ENCODE measurements at regions of chr6 and their contacts with region 1.

Region 1: DNA sequence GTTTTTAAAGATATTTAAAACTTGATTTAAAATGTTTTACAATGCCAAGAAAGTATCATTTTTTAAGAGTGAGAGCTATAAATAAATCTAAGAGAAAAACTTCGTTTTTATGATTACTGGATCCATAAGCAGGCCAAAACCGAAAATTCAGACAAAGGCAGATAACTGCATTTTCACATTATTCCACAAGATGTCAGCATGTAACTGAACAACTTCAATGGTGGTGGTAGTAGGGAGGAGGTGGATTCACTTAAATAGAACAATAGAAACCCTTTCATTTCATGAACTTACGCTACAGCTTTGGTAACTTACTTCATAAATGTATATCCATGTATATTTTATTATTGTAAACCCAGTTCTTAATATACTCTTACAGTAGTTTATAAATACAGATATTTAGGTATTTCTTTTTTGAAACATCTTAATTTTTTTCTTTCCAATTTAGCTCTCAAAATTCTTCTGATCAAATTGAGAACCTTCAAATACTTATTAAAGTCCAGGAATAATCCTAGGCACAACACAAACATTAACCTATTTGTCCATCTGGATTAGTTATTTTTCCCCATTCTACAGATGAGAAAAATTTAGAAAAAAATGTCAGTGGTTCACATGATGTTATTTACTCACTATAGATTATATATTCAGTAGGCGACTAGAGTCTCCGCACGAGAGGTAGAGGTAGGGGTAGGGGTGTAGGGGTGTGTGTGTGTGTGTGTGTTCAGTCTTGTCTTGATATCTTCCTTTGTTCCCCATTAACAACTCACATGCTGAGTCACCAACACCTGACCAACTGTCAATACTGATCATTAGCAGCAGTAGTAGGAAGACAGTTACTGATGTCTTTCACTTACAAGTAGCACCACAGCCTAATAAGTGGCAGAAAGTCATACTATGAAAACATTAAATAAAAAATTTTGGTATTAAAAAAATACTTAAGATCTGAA is 111.5 kb downstream of the ARHGAP18 start:
- DNase-seq: peak in 1 of 2 experiments; percentile 60
- H3K4me3 ChIP-seq: no peak overlapping the region
- H3K4me3 Mint-ChIP-seq: no peak overlapping the region
- H3K27ac Mint-ChIP-seq: no peak overlapping the region
- H3K4me1 ChIP-seq: peaks cover 6% of the 10 kb centered on the region
- H3K4me1 Mint-ChIP-seq: no peaks in the 10 kb centered on the region
- H3K27me3 ChIP-seq: no peaks in the 10 kb centered on the region
- H3K27me3 Mint-ChIP-seq: no peaks in the 10 kb centered on the region
- CTCF ChIP-seq: peak; percentile 61

Region 2: DNA sequence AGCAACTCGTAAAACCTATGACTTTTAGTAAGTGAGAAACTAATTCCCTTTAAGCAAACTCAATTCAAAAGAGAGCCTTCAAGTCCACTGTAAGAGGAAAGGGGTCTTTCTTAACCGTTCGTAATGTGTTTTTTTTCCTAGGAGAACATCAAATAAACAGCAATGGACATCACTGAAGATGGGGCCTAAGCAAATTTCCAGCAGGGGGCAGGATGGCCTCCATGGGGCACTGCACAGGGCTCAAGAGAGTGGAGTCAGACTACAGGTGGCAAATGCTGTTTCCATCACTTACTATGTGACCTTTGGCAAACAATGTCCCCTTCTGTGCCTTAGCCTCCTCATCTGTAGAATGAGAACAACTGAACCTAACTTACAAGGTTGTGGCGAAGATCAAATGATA is 22.7 kb after region 1 on chr6:
- CTCF ChIA-PET with region 1: no interaction called
- POLR2A ChIA-PET with region 1: no interaction called
- intact Hi-C with region 1: no loop called
- DNase-seq: peak in 1 of 2 experiments; percentile 34
- H3K4me3 ChIP-seq: no peak overlapping the region
- H3K4me3 Mint-ChIP-seq: no peak overlapping the region
- H3K27ac Mint-ChIP-seq: no peak overlapping the region
- H3K4me1 ChIP-seq: no peaks in the 10 kb centered on the region
- H3K4me1 Mint-ChIP-seq: no peaks in the 10 kb centered on the region
- H3K27me3 ChIP-seq: no peaks in the 10 kb centered on the region
- H3K27me3 Mint-ChIP-seq: no peaks in the 10 kb centered on the region
- CTCF ChIP-seq: peak in 1 of 2 experiments; percentile 28

Region 3: DNA sequence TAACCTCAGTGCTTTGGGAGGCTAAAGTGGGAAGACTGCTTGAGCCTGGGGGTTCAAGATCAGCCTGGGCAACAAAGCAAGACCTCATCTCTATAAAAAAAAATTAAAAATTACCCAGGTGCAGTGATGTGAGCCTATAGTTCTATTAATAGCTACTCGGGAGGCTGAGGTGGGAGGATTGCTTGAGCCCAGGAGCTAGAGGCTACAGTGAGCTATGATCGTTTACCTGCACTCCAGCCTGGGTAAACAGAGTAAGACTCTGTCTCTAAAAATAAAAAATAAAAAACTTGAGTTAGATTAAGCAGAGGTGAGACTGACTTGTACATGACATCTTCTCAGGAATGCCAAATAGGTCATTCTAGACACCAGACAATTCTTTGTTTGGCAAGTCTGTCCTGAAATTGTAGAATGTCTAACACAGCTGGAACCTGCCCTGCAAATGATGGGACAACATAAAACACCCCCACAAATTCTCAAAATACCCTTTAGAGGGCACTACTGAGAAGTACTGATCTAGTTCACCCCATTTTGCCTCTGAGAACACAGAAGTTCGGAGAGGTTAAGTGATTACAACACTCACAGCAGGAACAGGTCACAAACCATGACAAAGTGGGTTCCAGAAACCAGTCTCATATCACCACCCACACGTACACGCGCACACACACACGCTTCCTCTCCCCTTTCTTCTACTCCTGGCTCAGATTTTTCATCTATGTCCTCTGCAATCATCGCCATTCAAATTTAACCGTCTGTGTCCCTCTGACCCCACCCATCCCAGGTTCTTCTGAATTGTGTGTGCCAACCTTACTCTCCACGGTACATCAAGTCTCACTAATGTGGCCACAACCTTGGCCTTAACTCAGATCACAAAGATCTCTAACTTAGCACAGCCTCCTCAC is 73.2 kb after region 1 on chr6:
- CTCF ChIA-PET with region 1: no interaction called
- POLR2A ChIA-PET with region 1: no interaction called
- intact Hi-C with region 1: loop called (anchors 1 kb)
- DNase-seq: peak in 1 of 2 experiments; percentile 30
- H3K4me3 ChIP-seq: no peak overlapping the region
- H3K4me3 Mint-ChIP-seq: no peak overlapping the region
- H3K27ac Mint-ChIP-seq: peak overlapping the region; percentile 73
- H3K4me1 ChIP-seq: peaks cover 34% of the 10 kb centered on the region
- H3K4me1 Mint-ChIP-seq: peaks cover 38% of the 10 kb centered on the region
- H3K27me3 ChIP-seq: no peaks in the 10 kb centered on the region
- H3K27me3 Mint-ChIP-seq: no peaks in the 10 kb centered on the region
- CTCF ChIP-seq: no peak

Region 4: DNA sequence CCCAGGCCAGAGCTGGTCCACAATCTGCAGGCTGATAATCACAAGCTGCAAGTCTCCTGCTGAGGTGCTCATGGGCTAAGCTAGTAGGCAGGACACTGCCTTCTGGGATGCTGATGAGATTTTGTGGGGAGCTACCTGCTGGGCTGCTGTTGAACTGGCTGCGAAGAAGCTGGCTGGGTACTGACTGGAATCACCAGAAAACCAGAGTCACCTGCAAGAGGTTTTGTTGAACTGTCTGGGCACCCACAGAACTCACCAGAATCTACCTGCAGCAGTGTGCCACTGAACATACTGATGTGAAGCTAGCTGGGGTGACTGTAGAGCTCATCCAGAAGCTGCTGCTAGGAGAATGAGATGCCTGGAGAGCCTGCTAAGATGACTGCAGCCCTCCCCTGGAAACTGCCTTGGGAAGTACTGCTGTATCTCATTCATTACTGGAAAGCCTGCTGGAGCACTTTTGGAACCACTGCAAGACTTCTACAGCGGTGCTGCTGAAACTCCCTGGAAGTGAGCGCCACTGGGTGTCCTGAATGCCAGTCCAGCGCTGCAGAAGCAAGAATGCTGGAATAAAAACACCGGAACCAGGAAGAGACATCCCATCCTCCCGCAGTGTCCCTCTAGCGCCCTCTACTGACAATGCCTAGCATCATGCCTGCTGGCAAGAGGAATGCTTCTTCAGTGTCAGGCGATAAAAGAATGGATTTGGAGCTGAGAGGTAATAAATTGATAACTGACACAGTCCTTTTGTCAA is 176.4 kb after region 1 on chr6:
- CTCF ChIA-PET with region 1: no interaction called
- POLR2A ChIA-PET with region 1: no interaction called
- intact Hi-C with region 1: loop called (anchors 1 kb)
- DNase-seq: peak; percentile 75 to 77
- H3K4me3 ChIP-seq: no peak overlapping the region
- H3K4me3 Mint-ChIP-seq: peak overlapping the region; percentile 45
- H3K27ac Mint-ChIP-seq: no peak overlapping the region
- H3K4me1 ChIP-seq: peaks cover 9% of the 10 kb centered on the region
- H3K4me1 Mint-ChIP-seq: no peaks in the 10 kb centered on the region
- H3K27me3 ChIP-seq: no peaks in the 10 kb centered on the region
- H3K27me3 Mint-ChIP-seq: no peaks in the 10 kb centered on the region
- CTCF ChIP-seq: peak; percentile 72 to 88

Region 5: DNA sequence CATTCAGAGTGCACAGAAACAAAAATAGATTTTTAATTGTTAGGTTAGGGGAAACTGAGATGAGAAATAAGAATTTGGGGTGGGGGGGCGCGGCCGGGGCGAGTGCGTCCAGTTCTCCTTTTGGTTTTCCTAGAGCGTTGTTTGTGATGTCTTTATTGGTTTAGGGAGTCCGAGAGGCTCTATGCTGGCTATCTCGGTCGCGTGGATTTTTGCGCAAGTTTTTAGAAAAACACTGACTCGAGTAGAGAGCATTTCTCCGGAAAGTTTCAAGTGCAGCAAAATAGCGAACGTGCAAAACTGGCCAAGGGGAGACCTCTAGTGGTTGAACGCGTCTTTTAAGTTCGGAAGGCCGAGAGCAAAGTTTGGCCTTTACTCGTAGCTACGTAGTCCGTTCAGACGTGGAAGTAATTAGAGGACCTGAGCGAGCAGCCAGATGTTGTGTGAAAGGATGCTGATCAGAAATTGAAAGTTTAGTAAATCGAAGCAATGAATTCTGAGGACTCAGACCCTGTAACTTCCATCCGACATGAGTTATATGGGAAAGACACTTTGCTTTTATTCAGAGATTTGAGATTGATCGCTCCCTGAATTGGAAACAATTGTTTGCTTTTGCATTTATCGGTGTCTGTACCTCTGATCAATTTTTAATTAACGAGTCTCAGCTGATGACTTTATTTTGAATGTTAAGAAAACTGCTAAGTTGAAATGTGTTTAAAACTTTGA is 422.6 kb after region 1 on chr6:
- CTCF ChIA-PET with region 1: no interaction called
- POLR2A ChIA-PET with region 1: no interaction called
- intact Hi-C with region 1: loop called (anchors 1 kb)
- DNase-seq: peak; percentile 77 to 82
- H3K4me3 ChIP-seq: peak overlapping the region; percentile 80
- H3K4me3 Mint-ChIP-seq: peak overlapping the region; percentile 83
- H3K27ac Mint-ChIP-seq: peak overlapping the region; percentile 50
- H3K4me1 ChIP-seq: peaks cover 8% of the 10 kb centered on the region; the same call in 1 of the 2 replicates
- H3K4me1 Mint-ChIP-seq: no peaks in the 10 kb centered on the region
- H3K27me3 ChIP-seq: no peaks in the 10 kb centered on the region
- H3K27me3 Mint-ChIP-seq: no peaks in the 10 kb centered on the region
- CTCF ChIP-seq: peak; percentile 73 to 76